H1 (cell line): ENCODE measurements at regions of chr7 and their contacts with region 1.

Region 1: DNA sequence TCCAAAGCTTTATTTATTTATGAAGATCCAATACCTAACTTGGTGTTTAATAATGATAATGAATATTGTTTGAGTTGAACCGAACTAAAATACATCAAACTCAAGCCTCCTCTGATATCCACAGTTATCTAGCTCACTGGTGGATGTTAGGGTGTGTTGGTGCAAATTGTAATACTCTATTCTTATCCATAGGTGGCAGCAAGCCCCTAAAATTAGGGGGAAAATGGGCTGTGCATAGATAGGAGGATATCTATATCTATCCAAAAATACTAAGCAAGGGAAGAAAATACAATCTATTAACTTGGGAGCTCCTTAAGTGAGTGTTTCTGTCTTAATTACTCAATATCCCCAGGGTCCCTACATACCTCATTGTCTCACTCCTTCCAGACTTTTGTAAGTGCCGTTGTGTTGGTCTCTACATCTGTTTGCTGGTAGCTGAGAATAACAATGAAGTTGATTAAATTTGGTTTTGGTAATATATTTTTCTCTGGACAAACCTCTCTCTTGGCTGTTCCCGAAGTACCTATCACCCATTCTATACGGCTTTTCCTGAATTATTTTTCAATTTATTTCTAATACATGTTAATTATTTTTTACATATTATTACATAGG is 55.0 kb upstream of the VWDE start:
- DNase-seq: no peak
- H3K4me3 ChIP-seq: no peak overlapping the region
- H3K27ac ChIP-seq: no peak overlapping the region
- H3K4me1 ChIP-seq: no peaks in the 10 kb centered on the region
- H3K27me3 ChIP-seq: no peaks in the 10 kb centered on the region
- CTCF ChIP-seq: peak in 2 of 3 experiments; percentile 65 to 73; a peak in 3 of 4 replicates
- EP300 ChIP-seq: no peak
- POLR2A ChIP-seq: no peak
- RAD21 ChIP-seq: peak; percentile 83 to 85

Region 2: DNA sequence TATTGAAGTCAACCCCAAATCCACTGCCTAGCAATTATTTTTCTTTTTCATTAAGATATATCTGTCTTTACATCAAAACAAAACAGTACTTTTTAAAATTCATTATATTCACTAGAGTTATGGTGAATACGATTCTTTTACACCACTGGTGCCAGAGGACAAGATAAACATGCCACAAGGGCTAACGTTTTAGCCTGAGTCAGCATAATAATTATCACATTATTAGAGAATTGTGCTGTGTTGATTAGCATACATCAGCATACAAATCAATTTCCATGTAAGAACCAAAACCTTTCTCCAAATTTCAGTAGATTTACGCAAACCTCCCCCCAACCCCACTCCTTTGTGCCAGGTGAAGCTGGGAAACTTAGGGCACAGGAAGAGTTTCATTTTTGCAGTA is 378.6 kb before region 1 on chr7:
- CTCF ChIA-PET with region 1: no interaction called
- POLR2A ChIA-PET with region 1: no interaction called
- DNase-seq: no peak
- H3K4me3 ChIP-seq: 0 out of 8 replicates have a peak overlapping the region, but pooled peaks of 1 of the 4 experiments have one; percentile 9
- H3K27ac ChIP-seq: no peak overlapping the region
- H3K4me1 ChIP-seq: peaks cover 0 to 6% (median 4%) of the 10 kb centered on the region in 4 experiments; a peak in 5 of 7 replicates
- H3K27me3 ChIP-seq: no peaks in the 10 kb centered on the region
- CTCF ChIP-seq: no peak
- EP300 ChIP-seq: no peak
- POLR2A ChIP-seq: no peak
- RAD21 ChIP-seq: no peak

Region 3: GRCh38 chr7:12294701-12295100 is 163.9 kb before region 1 on chr7:
- CTCF ChIA-PET with region 1: interaction called, 11 read pairs
- POLR2A ChIA-PET with region 1: no interaction called
- DNase-seq: no peak
- H3K4me3 ChIP-seq: no peak overlapping the region
- H3K27ac ChIP-seq: no peak overlapping the region
- H3K4me1 ChIP-seq: peaks cover 0 to 10% (median 2%) of the 10 kb centered on the region in 4 experiments; a peak in 2 of 7 replicates
- H3K27me3 ChIP-seq: no peaks in the 10 kb centered on the region
- CTCF ChIP-seq: no peak
- EP300 ChIP-seq: no peak
- POLR2A ChIP-seq: no peak
- RAD21 ChIP-seq: no peak

Region 4: DNA sequence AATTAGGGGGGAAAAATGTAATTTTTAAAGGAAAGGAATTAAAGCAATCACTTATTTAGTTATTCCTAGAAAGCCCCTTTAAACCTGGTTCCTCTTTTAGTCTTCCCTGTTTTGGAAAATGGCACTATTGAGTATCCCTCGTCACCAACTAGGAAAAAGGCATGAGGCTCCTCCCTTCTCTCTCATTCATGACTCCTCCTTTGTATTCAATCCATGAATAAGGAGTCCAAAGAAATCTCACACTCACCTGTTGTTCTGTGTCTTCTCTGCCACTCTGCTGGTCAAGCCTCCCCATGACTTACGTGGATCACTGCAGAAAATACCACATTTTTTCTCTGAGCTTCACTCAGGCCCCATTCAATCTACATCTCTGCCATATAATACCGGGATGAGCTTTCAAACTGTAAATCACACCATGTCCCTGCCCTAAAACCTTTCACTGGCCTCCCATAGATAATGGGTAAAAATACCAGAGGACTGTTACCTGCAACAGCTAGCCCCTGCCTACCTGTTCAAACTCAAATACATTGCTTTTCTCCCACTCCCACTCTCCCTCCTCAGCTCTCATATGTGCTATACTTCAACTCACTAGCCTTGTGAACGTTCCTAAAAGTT is 49.4 kb before region 1 on chr7:
- CTCF ChIA-PET with region 1: interaction called, 13 read pairs
- POLR2A ChIA-PET with region 1: no interaction called
- DNase-seq: no peak
- H3K4me3 ChIP-seq: no peak overlapping the region
- H3K27ac ChIP-seq: no peak overlapping the region
- H3K4me1 ChIP-seq: peaks cover 0 to 7% (median 0%) of the 10 kb centered on the region in 4 experiments; a peak in 3 of 7 replicates
- H3K27me3 ChIP-seq: no peaks in the 10 kb centered on the region
- CTCF ChIP-seq: no peak
- EP300 ChIP-seq: no peak
- POLR2A ChIP-seq: no peak
- RAD21 ChIP-seq: no peak

Region 5: GRCh38 chr7:12469568-12469967 is 10.9 kb after region 1 on chr7:
- CTCF ChIA-PET with region 1: interaction called, 61 read pairs
- POLR2A ChIA-PET with region 1: no interaction called
- DNase-seq: no peak
- H3K4me3 ChIP-seq: no peak overlapping the region
- H3K27ac ChIP-seq: no peak overlapping the region
- H3K4me1 ChIP-seq: no peaks in the 10 kb centered on the region
- H3K27me3 ChIP-seq: no peaks in the 10 kb centered on the region
- CTCF ChIP-seq: no peak
- EP300 ChIP-seq: no peak
- POLR2A ChIP-seq: no peak
- RAD21 ChIP-seq: no peak

Region 6: DNA sequence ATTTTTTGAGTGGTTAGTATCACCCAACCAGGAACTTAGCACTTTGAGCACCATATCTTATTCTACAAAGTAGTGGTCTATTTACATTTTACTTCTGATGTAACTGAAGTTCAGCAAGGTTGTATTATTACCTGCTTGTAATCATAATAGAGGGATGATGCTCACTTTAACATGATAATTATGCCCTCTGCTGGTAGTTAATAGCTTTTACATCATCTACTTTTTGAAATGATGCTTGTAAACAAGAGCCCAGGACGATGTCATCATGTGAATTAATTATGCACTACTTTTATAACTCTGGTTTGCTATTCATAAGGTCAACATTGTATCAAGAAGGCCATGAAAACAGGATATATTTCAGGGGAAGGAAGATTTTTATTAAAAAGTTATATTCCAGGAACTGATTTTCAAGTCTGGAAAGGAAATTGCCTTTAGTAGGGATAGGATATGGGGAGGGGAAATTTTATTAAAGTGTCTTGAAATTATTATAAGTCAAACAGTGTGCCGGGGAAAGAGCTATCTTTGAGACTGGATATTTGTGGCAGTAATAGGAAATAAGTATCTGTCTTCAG is 31.6 kb after region 1 on chr7:
- CTCF ChIA-PET with region 1: interaction called, 103 read pairs
- POLR2A ChIA-PET with region 1: no interaction called
- DNase-seq: no peak
- H3K4me3 ChIP-seq: no peak overlapping the region
- H3K27ac ChIP-seq: no peak overlapping the region
- H3K4me1 ChIP-seq: peaks cover 0 to 4% (median 0%) of the 10 kb centered on the region in 4 experiments; a peak in 1 of 7 replicates
- H3K27me3 ChIP-seq: no peaks in the 10 kb centered on the region
- CTCF ChIP-seq: peak in 2 of 3 experiments; percentile 44 to 51; a peak in 2 of 4 replicates
- EP300 ChIP-seq: no peak; a peak in 1 of 3 replicates
- POLR2A ChIP-seq: no peak
- RAD21 ChIP-seq: peak; percentile 55 to 62

Region 7: DNA sequence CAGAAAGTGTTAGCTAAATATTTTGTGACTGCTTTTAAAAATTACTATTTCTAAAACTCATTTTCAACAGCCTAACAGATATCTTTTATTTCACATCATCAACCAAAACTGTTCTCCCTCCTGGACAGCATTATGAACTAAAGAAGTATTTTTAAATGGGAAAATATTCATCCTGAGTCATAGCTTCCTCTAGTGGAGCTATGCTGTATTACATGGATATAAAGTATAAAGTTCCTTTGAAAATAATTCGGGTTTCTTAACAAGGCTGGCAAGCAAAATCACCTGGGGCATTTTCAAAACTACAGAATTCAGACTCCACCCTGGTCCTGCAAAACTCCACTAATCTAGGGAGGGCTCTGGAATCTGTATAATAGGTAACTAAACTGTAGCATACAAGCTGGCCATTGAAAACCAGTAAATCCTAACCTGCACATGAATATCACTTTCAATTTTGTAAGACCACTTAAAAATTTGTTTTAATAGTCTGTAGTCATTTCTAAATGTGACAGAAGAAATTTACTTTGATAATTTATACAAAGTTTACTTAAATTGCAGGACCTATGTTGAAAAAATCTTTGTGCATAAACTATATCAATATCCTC is 165.4 kb after region 1 on chr7:
- CTCF ChIA-PET with region 1: interaction called, 13 read pairs
- POLR2A ChIA-PET with region 1: no interaction called
- DNase-seq: no peak
- H3K4me3 ChIP-seq: no peak overlapping the region
- H3K27ac ChIP-seq: no peak overlapping the region
- H3K4me1 ChIP-seq: no peaks in the 10 kb centered on the region
- H3K27me3 ChIP-seq: no peaks in the 10 kb centered on the region
- CTCF ChIP-seq: peak in 2 of 3 experiments; percentile 41 to 48; a peak in 2 of 4 replicates
- EP300 ChIP-seq: no peak
- POLR2A ChIP-seq: no peak
- RAD21 ChIP-seq: peak; percentile 68 to 78